Activated CD4-positive, alpha-beta memory T cell treated with anti-CD3 and anti-CD28 coated beads for 36 hours (primary cell): ENCODE measurements at regions of chrX and their contacts with region 1.

Region 1: DNA sequence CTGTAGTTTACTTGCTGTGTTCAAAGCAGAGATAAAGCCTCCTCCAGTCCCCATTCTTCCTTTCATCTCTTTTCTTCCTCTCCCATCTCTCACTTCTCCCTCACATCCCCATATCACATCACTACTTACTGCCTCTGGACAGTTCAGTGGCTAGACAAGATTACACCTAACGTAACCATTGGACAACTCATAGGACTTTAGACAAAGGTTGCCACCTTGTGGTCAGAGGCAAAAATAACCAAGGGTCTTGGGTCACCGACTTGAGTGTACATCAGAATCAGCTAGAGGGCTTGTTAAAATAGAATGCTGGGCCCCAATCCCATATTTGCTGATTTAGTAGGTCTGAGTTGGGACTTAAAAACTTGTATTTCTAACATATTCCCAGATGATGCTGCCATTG is 109.3 kb upstream of the DGKK start:
- DNase-seq: peak; percentile 14
- H3K4me3 Mint-ChIP-seq: no peak overlapping the region
- H3K27ac Mint-ChIP-seq: no peak overlapping the region
- H3K4me1 Mint-ChIP-seq: no peaks in the 10 kb centered on the region
- H3K27me3 Mint-ChIP-seq: no peaks in the 10 kb centered on the region

Region 2: GRCh38 chrX:49915361-49916222 is 664.4 kb before region 1 on chrX:
- CTCF ChIA-PET with region 1: interaction called, 11 read pairs
- POLR2A ChIA-PET with region 1: no interaction called
- intact Hi-C with region 1: loop called (anchors 1 kb)
- DNase-seq: peak; percentile 39
- H3K4me3 Mint-ChIP-seq: no peak overlapping the region
- H3K27ac Mint-ChIP-seq: no peak overlapping the region
- H3K4me1 Mint-ChIP-seq: peaks cover under 1% of the 10 kb centered on the region
- H3K27me3 Mint-ChIP-seq: no peaks in the 10 kb centered on the region

Region 3: DNA sequence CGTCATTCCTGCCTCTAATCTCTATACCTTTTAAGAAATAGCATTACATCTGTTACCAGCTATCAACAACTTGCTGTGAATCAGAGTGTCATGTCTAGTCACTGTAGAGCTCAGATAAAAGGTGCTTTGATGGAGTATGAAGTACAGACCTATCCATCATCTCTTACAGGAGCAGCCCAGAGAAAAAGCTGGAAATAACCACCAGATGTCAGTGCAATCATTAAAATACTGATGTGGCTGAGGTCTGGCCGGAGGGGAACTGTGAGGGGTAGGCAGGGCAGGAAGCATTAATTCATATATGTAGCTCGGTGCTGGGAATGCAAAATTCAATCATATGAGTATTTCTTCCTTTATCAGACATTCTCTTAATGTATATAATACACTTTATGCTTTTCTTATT is 479.8 kb before region 1 on chrX:
- CTCF ChIA-PET with region 1: no interaction called
- POLR2A ChIA-PET with region 1: no interaction called
- intact Hi-C with region 1: loop called (anchors 2 kb)
- DNase-seq: no peak
- H3K4me3 Mint-ChIP-seq: no peak overlapping the region
- H3K27ac Mint-ChIP-seq: no peak overlapping the region
- H3K4me1 Mint-ChIP-seq: no peaks in the 10 kb centered on the region
- H3K27me3 Mint-ChIP-seq: no peaks in the 10 kb centered on the region